ENCODE measurements at regions of chr18 and their contacts with region 1.

Region 1: DNA sequence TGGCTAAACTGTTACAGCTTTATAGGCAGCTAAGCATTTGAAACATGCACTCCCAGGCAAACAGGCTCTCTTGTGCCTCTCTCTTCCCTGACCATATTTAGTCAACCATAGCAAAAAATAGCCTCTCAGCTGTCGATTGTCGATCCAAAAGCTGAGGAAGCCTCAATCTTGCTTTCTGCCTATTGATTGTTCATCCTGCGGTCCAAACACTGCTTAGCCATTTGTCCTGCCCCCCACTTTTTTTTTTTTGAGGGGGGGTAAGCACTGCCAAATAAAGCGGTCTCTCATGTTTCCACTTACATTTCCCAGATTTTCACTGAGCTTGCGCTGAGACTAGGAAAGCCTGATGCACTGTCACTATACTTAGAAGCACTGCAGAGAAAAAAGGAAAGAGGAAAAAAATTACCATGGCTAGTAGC is 90.8 kb downstream of the MIB1 start:
- DNase-seq: no peak

Region 2: DNA sequence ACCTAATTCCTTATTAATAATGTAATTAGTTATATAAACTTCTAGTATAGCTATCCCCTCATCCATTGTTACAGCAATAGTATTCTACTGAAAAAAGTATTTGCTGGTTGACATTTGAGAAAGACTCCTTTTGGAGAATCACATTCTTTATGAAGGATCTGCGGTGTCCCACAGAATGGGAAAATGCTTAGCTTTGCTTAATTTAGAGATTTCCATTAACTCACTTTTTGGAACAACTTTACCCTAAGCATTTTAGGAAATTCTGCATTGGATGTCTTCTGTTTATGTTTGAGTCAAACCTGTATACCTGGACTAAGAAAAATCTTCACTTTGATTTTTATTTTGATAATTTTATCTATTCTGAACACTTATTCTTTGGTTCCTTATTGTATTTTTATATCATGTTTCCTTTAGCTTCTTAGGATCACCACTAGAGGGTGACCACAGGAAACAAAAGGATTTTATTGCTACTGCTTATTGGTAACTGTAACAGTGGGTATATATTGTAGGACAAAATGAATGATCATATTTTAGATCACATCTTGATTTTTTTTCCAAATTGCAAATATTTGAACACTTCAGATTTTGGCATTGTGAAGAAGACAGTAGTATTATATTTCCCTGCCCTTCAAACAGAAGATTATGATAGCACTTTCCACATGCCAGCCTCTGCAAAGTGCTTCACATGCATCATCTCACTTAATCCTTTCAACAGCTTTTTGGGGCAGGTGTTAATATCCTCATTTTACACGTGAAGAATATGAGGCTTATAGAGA is 11.2 kb before region 1 on chr18:
- CTCF ChIA-PET with region 1: interaction called, 15 read pairs
- POLR2A ChIA-PET with region 1: no interaction called
- DNase-seq: peak; percentile 27